Ascending aorta (tissue), 2 donors: ENCODE measurements at regions of chrX and their contacts with region 1.

Region 1: GRCh38 chrX:73943693-73944562 is 360.1 kb upstream of the ZCCHC13 start:
- DNase-seq: peak; percentile 64 to 93
- H3K4me3 ChIP-seq: peak overlapping the region; percentile 62 to 84
- H3K27ac ChIP-seq: peak overlapping the region; percentile 72 to 79
- H3K4me1 ChIP-seq: peaks cover 0 to 3% of the 10 kb centered on the region in 2 donors
- H3K27me3 ChIP-seq: no peaks in the 10 kb centered on the region
- CTCF ChIP-seq: no peak

Region 2: DNA sequence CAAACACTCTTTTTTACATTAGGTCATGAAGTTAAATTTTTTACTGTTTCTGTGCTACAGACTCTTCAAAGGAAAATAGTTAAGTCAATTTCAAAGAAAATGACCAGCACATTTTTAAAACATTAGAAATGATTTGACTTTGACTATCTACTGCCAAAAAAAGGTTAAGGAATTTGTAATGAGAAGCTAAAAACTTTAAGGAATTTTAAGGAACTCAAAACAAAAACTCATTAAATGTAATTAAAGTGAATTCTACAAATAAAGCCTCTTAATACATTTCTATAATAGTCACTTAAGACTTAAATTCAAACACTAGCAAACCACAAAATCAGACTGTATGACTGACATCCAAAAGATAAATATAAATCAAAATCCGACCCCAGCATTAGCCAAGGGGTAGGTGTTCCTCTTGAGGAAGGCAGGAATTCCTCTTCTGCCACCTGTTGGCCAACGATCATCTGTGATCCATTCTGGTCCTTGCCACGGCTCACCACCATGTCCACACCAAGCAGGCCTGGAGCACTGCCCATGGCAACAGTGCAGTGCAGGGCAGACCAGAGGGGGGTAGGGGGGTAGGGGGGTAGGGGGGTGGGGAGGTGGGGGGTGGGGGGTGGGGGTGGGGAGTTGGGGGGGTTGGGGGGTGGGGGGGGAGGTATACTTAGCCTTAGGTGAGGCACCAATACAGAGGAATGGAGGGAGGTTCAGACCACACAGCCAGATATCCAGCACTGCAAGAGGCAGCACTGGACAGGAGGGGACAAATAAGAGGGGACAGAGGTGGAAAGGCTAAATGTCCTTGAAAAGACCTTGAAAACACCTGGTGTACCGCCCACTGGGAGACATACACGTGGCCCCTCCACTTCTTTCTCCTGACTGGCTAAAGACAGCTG is 93.6 kb before region 1 on chrX:
- intact Hi-C with region 1: loop called (anchors 5 kb)
- DNase-seq: no peak
- H3K4me3 ChIP-seq: peak overlapping the region in 1 of 2 donors; percentile 57
- H3K27ac ChIP-seq: peak overlapping the region in 1 of 2 donors; percentile 64
- H3K4me1 ChIP-seq: no peaks in the 10 kb centered on the region
- H3K27me3 ChIP-seq: no peaks in the 10 kb centered on the region
- CTCF ChIP-seq: no peak